ENCODE measurements at regions of chr2 and their contacts with region 1.

Region 1: DNA sequence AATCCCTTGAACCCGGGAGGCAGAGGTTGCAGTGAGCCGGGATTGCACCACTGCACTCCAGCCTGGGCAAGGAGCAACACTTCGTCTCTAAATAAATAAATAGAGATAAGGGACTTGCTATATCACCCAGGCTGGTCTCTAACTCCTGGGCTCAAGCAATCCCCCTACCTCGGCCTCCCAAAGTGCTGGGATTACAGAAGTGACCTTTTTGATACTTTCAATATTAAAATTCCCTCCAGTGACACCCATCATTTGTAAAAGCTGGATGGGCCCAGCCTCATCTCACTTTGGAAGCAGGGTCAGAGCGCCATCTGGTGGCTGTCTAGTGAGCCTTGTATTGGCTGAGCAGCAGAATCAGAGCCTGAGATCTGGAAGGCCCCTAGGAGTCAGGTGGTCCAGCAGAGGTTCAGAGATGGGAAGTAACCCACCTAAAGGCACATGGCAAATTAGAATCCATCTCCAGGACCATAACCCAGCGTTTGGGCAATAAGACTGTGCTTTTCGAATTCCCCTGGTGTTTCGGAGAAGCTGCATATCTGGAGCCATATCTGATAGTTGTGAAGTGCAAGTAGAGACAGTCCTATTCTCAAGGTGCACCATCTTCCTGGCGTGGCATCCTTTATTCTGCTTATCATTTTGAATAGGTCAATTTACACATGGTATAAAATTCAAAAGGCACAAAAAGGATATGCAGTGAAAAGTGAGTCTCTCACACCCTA is 18.3 kb upstream of the SLC35F6 start:
- DNase-seq: peak; percentile 76 to 88
- ATAC-seq: peak; percentile 47 to 63 (median 59)
- H3K4me3 ChIP-seq: no peak overlapping the region
- H3K4me3 Mint-ChIP-seq: no peak overlapping the region
- H3K27ac ChIP-seq: no peak overlapping the region
- H3K27ac Mint-ChIP-seq: no peak overlapping the region
- H3K4me1 ChIP-seq: peaks cover 15% of the 10 kb centered on the region
- H3K4me1 Mint-ChIP-seq: peaks cover 10 to 12% of the 10 kb centered on the region in 2 donors
- H3K27me3 ChIP-seq: no peaks in the 10 kb centered on the region
- H3K27me3 Mint-ChIP-seq: peaks cover 0 to 5% of the 10 kb centered on the region in 2 donors
- CTCF ChIP-seq: peak; percentile 90

Region 2: GRCh38 chr2:26605195-26605998 is 140.4 kb before region 1 on chr2:
- intact Hi-C with region 1: loop called (anchors 1 kb)
- DNase-seq: peak; percentile 30 to 76
- ATAC-seq: peak; percentile 58 to 62 (median 61)
- H3K4me3 ChIP-seq: no peak overlapping the region
- H3K4me3 Mint-ChIP-seq: no peak overlapping the region
- H3K27ac ChIP-seq: no peak overlapping the region
- H3K27ac Mint-ChIP-seq: no peak overlapping the region
- H3K4me1 ChIP-seq: peaks cover 24% of the 10 kb centered on the region
- H3K4me1 Mint-ChIP-seq: peaks cover 23 to 34% of the 10 kb centered on the region in 2 donors
- H3K27me3 ChIP-seq: peaks cover 4% of the 10 kb centered on the region
- H3K27me3 Mint-ChIP-seq: peaks cover 11 to 43% of the 10 kb centered on the region in 2 donors
- CTCF ChIP-seq: peak; percentile 90

Measured in natural killer cell (primary cell).